ENCODE measurements at regions of chr11 and their contacts with region 1.

Region 1: GRCh38 chr11:35151241-35151640 is 12.3 kb downstream of the CD44 start:
- DNase-seq: no peak
- ATAC-seq: peak in 1 of 2 experiments; percentile 50; a peak in 3 of 6 replicates
- H3K4me3 ChIP-seq: no peak overlapping the region
- H3K27ac ChIP-seq: peak overlapping the region; percentile 20 to 44; a peak in 4 of 6 replicates
- H3K4me1 ChIP-seq: peaks cover 46% of the 10 kb centered on the region
- CTCF ChIP-seq: no peak
- EP300 ChIP-seq: no peak
- POLR2A ChIP-seq: no peak
- RAD21 ChIP-seq: no peak

Region 2: DNA sequence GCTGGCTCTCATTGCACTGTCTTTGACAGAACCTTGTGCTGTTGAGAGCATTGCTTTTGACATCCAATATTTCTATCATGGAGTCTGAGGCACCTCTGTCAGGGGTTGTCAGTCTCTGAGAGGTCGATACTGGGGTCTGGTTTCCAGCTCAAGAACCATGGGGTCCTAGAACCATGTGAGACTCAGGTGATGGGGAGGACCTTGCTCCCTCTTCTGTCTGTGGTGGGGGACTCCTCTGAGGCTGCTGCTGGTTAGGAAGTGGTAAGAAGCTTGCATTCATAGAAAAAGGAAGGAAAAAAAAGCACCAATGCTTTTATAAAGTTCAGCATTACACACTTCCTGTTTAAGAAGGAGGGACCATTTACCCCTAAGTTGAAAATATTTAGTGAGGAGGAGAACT is 104.1 kb before region 1 on chr11:
- CTCF ChIA-PET with region 1: no interaction called
- POLR2A ChIA-PET with region 1: no interaction called
- DNase-seq: no peak
- ATAC-seq: no peak
- H3K4me3 ChIP-seq: no peak overlapping the region
- H3K27ac ChIP-seq: no peak overlapping the region
- H3K4me1 ChIP-seq: peaks cover 9% of the 10 kb centered on the region; the same call in 2 of the 3 replicates
- CTCF ChIP-seq: no peak
- EP300 ChIP-seq: no peak
- POLR2A ChIP-seq: no peak
- RAD21 ChIP-seq: no peak

Region 3: GRCh38 chr11:35165423-35166368 is 14.5 kb after region 1 on chr11:
- CTCF ChIA-PET with region 1: interaction called, 17 read pairs
- POLR2A ChIA-PET with region 1: no interaction called
- DNase-seq: peak in 1 of 2 experiments; percentile 31
- ATAC-seq: peak; percentile 40 to 48; a peak in 4 of 6 replicates
- H3K4me3 ChIP-seq: no peak overlapping the region
- H3K27ac ChIP-seq: peak overlapping the region; percentile 76 to 87
- H3K4me1 ChIP-seq: peaks cover 98% of the 10 kb centered on the region
- CTCF ChIP-seq: no peak
- EP300 ChIP-seq: peak; percentile 88 to 92; a peak in 3 of 5 replicates
- POLR2A ChIP-seq: no peak
- RAD21 ChIP-seq: peak; percentile 1 to 43; a peak in 2 of 5 replicates

Region 4: GRCh38 chr11:35363854-35364780 is 212.9 kb after region 1 on chr11:
- CTCF ChIA-PET with region 1: no interaction called
- POLR2A ChIA-PET with region 1: no interaction called
- DNase-seq: peak; percentile 46 to 74
- ATAC-seq: peak; percentile 87 to 93
- H3K4me3 ChIP-seq: no peak overlapping the region
- H3K27ac ChIP-seq: peak overlapping the region; percentile 76 to 85
- H3K4me1 ChIP-seq: peaks cover 43% of the 10 kb centered on the region
- CTCF ChIP-seq: no peak
- EP300 ChIP-seq: peak; percentile 44 to 65; a peak in 2 of 5 replicates
- POLR2A ChIP-seq: no peak
- RAD21 ChIP-seq: peak in 1 of 2 experiments; percentile 48; a peak in 3 of 5 replicates